B cell (primary cell): ENCODE measurements at regions of chr19 and their contacts with region 1.

Region 1: DNA sequence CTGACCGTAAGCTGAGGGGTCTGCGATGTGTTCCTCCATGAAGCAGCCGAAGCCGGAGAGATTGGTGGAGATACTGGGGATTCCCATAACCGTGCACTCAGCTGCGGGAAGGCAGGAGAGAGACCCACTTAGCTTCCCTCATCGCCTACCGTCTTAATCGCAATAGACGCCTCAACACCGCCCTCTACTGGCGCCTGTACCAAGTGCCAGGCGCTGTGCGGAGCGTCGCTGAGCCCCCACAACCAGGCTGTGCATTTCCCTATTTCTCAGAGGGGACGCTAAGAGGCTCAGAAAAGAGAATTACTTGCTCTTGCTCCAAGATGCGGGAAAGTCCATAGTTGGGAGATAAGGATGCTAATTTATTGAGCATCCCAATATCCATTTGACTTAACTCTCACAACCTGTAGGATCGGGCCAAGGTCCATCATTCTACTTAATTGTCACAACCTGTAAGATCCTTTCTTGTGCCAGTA is 5.8 kb downstream of the FTL start:
- DNase-seq: peak; percentile 91
- ATAC-seq: peak; percentile 89
- H3K4me3 ChIP-seq: no peak overlapping the region
- H3K4me3 Mint-ChIP-seq: no peak overlapping the region
- H3K27ac ChIP-seq: no peak overlapping the region
- H3K27ac Mint-ChIP-seq: peak overlapping the region; percentile 63
- H3K4me1 ChIP-seq: peaks cover 12 to 29% of the 10 kb centered on the region in 2 donors
- H3K4me1 Mint-ChIP-seq: peaks cover 34% of the 10 kb centered on the region
- H3K27me3 ChIP-seq: no peaks in the 10 kb centered on the region
- H3K27me3 Mint-ChIP-seq: no peaks in the 10 kb centered on the region
- CTCF ChIP-seq: peak; percentile 93

Region 2: DNA sequence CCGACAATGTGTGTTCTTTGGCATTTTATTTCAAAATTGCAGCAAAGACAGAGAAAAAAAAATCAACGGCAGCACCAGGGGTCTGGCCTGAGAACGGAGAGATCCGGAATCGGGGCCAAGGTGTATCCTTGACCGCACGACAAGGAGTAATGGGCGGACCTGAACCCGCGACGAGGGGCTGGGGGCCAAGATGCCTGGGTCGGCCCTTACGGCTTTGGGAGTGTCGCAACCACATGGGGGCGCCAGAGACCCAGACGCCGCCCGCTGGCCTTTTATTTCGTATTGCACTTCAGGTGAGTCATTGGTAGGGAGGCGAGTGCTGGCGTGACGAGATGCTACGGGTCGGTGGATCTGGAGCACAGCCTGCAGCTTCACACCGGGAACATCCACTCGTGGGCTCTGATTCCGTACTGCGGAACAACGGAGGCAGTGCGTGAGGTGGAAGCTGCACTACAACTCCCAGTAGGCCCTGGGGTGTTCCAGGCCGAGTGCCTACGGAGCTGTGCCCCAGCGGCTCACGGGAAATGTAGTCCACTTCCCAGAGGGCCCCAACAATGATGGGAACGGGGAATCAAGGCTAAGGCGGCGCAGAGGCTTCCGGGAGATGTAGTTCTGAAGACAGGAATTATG is 175.8 kb before region 1 on chr19:
- CTCF ChIA-PET with region 1: interaction called, 70 read pairs
- POLR2A ChIA-PET with region 1: interaction called, 5 read pairs
- intact Hi-C with region 1: loop called (anchors 1 kb)
- DNase-seq: peak; percentile 93
- ATAC-seq: peak; percentile 98
- H3K4me3 ChIP-seq: peak overlapping the region; percentile 42 to 68 (median 60)
- H3K4me3 Mint-ChIP-seq: peak overlapping the region; percentile 98
- H3K27ac ChIP-seq: peak overlapping the region; percentile 30 to 62
- H3K27ac Mint-ChIP-seq: peak overlapping the region; percentile 93
- H3K4me1 ChIP-seq: peaks cover 3 to 10% of the 10 kb centered on the region in 2 donors
- H3K4me1 Mint-ChIP-seq: peaks cover 11% of the 10 kb centered on the region
- H3K27me3 ChIP-seq: no peaks in the 10 kb centered on the region
- H3K27me3 Mint-ChIP-seq: no peaks in the 10 kb centered on the region
- CTCF ChIP-seq: peak; percentile 96

Region 3: DNA sequence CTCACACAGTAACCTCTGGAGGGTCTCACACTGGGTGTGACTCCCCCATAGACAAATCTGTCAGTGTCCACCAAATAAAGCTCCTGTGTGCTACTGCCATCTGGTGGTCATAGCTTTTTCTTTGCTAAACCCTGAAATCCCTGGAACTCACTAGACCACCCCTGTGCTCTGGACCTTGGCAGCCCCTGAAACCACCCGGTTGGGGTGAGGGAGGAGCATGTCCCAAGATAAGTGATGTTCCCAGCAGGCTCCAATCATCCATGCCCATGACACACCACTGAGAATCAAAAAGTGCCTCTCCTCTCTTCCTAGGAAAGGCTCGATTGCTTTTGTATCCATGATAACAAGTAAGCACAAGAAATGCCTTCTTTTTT is 128.2 kb before region 1 on chr19:
- CTCF ChIA-PET with region 1: interaction called, 64 read pairs
- POLR2A ChIA-PET with region 1: no interaction called
- intact Hi-C with region 1: loop called (anchors 1 kb)
- DNase-seq: peak; percentile 79
- ATAC-seq: peak; percentile 71
- H3K4me3 ChIP-seq: no peak overlapping the region
- H3K4me3 Mint-ChIP-seq: no peak overlapping the region
- H3K27ac ChIP-seq: no peak overlapping the region
- H3K27ac Mint-ChIP-seq: no peak overlapping the region
- H3K4me1 ChIP-seq: no peaks in the 10 kb centered on the region
- H3K4me1 Mint-ChIP-seq: peaks cover 3% of the 10 kb centered on the region
- H3K27me3 ChIP-seq: no peaks in the 10 kb centered on the region
- H3K27me3 Mint-ChIP-seq: no peaks in the 10 kb centered on the region
- CTCF ChIP-seq: peak; percentile 82

Region 4: GRCh38 chr19:48881741-48882657 is 89.0 kb before region 1 on chr19:
- CTCF ChIA-PET with region 1: interaction called, 30 read pairs
- POLR2A ChIA-PET with region 1: interaction called, 15 read pairs
- intact Hi-C with region 1: no loop called
- DNase-seq: peak; percentile 61
- ATAC-seq: peak; percentile 54
- H3K4me3 ChIP-seq: no peak overlapping the region
- H3K4me3 Mint-ChIP-seq: no peak overlapping the region
- H3K27ac ChIP-seq: no peak overlapping the region
- H3K27ac Mint-ChIP-seq: no peak overlapping the region
- H3K4me1 ChIP-seq: peaks cover 0 to 18% of the 10 kb centered on the region in 2 donors
- H3K4me1 Mint-ChIP-seq: peaks cover 17% of the 10 kb centered on the region
- H3K27me3 ChIP-seq: no peaks in the 10 kb centered on the region
- H3K27me3 Mint-ChIP-seq: no peaks in the 10 kb centered on the region
- CTCF ChIP-seq: no peak

Region 5: GRCh38 chr19:48943081-48943480 is 27.9 kb before region 1 on chr19:
- CTCF ChIA-PET with region 1: no interaction called
- POLR2A ChIA-PET with region 1: no interaction called
- intact Hi-C with region 1: no loop called
- DNase-seq: no peak
- ATAC-seq: no peak
- H3K4me3 ChIP-seq: no peak overlapping the region
- H3K4me3 Mint-ChIP-seq: no peak overlapping the region
- H3K27ac ChIP-seq: no peak overlapping the region
- H3K27ac Mint-ChIP-seq: no peak overlapping the region
- H3K4me1 ChIP-seq: no peaks in the 10 kb centered on the region
- H3K4me1 Mint-ChIP-seq: no peaks in the 10 kb centered on the region
- H3K27me3 ChIP-seq: no peaks in the 10 kb centered on the region
- H3K27me3 Mint-ChIP-seq: peaks cover 3% of the 10 kb centered on the region
- CTCF ChIP-seq: no peak

Region 6: GRCh38 chr19:48954595-48955310 is 16.2 kb before region 1 on chr19 and contains the start of gene BAX:
- CTCF ChIA-PET with region 1: interaction called, 14 read pairs
- POLR2A ChIA-PET with region 1: interaction called, 6 read pairs
- intact Hi-C with region 1: no loop called
- DNase-seq: peak; percentile 92
- ATAC-seq: peak; percentile 88
- H3K4me3 ChIP-seq: peak within 1 kb of the TSS; percentile 47 to 99 (median 87)
- H3K4me3 Mint-ChIP-seq: peak within 1 kb of the TSS; percentile 85
- H3K27ac ChIP-seq: peak within 1 kb of the TSS; percentile 84 to 89
- H3K27ac Mint-ChIP-seq: peak within 1 kb of the TSS; percentile 92
- H3K4me1 ChIP-seq: peaks cover 6 to 16% of the 10 kb centered on the region in 2 donors
- H3K4me1 Mint-ChIP-seq: peaks cover 20% of the 10 kb centered on the region
- H3K27me3 ChIP-seq: no peaks in the 10 kb centered on the region
- H3K27me3 Mint-ChIP-seq: no peaks in the 10 kb centered on the region
- CTCF ChIP-seq: no peak
- total RNA-seq, gene BAX: 92.7 and 95.3 TPM in 2 replicates